ENCODE measurements at regions of chr1 and their contacts with region 1.

Region 1: GRCh38 chr1:156728597-156729462 is at the start of gene ISG20L2:
- DNase-seq: peak; percentile 98
- H3K4me3 ChIP-seq: peak within 1 kb of the TSS; percentile 70 to 79 (median 74)
- H3K27ac ChIP-seq: peak within 1 kb of the TSS; percentile 93 to 98 (median 94)
- H3K4me1 ChIP-seq: peaks cover 41 to 61% (median 59%) of the 10 kb centered on the region in 4 donors
- H3K27me3 ChIP-seq: no peaks in the 10 kb centered on the region
- CTCF ChIP-seq: no peak
- EP300 ChIP-seq: no peak
- POLR2A ChIP-seq: peak; percentile 34
- total RNA-seq, gene ISG20L2: 16.2 to 20.0 (median 19.0) TPM

Region 2: GRCh38 chr1:156608036-156608674 is 120.7 kb before region 1 on chr1:
- intact Hi-C with region 1: no loop called
- DNase-seq: no peak
- H3K4me3 ChIP-seq: no peak overlapping the region
- H3K27ac ChIP-seq: peak overlapping the region in 1 of 4 donors; percentile 64
- H3K4me1 ChIP-seq: peaks cover 0 to 15% (median 8%) of the 10 kb centered on the region in 4 donors
- H3K27me3 ChIP-seq: no peaks in the 10 kb centered on the region
- CTCF ChIP-seq: peak; percentile 63 to 88 (median 85)
- EP300 ChIP-seq: no peak
- POLR2A ChIP-seq: no peak

Region 3: DNA sequence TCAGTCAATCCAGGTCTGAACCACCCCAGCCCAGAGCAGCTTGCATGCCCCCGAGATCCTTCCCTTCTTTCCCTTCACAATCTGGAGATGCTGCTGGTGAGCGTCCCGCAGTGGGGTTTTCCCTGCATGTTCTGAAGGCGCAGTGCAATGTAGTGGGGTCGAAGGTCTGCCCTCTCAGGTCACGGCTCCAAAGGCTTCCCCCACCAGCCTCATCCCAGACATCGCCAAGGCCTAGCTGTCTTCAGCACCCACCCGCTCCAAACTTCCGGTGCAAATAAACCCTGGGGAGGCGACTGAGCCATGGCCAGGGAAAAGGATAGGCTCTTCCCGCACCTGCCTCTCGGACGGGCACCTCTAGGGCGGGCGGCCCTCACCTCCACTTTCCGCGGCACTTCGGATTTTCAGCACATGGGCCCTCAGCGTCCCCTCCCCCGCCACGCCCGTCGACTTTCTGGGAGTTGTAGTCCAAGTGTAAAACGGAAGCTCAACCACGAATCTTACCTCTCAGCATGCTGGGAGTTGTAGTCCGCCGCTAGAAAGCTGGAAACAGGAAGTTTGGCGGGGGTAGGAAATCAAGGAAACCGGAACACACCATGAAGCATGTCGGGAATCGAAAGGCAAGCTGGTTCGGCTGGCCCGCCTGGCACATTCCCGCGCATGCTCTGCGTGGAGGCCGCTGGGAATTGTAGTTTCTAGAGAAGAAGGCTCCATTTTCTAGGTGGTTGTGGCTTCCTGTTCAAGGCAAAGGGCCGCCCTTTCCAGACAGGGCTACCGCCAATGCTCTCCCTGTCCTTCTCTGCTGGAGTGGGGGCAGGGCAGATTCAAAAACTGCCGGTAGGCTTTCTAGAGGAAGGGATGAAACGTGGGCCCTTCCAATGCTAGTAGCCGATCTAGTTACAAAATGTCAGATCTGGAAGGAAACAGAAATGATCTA is 12.1 kb after region 1 on chr1 and contains the start of gene MRPL24:
- intact Hi-C with region 1: loop called (anchors 1 kb)
- DNase-seq: peak; percentile 99
- H3K4me3 ChIP-seq: peak within 1 kb of the TSS; percentile 60 to 72 (median 66)
- H3K27ac ChIP-seq: peak within 1 kb of the TSS; percentile 80 to 88 (median 85)
- H3K4me1 ChIP-seq: peaks cover 24 to 45% (median 37%) of the 10 kb centered on the region in 4 donors
- H3K27me3 ChIP-seq: no peaks in the 10 kb centered on the region
- CTCF ChIP-seq: no peak
- EP300 ChIP-seq: no peak
- POLR2A ChIP-seq: peak; percentile 3
- total RNA-seq, gene MRPL24: 43.5 to 67.4 (median 62.4) TPM

Region 4: DNA sequence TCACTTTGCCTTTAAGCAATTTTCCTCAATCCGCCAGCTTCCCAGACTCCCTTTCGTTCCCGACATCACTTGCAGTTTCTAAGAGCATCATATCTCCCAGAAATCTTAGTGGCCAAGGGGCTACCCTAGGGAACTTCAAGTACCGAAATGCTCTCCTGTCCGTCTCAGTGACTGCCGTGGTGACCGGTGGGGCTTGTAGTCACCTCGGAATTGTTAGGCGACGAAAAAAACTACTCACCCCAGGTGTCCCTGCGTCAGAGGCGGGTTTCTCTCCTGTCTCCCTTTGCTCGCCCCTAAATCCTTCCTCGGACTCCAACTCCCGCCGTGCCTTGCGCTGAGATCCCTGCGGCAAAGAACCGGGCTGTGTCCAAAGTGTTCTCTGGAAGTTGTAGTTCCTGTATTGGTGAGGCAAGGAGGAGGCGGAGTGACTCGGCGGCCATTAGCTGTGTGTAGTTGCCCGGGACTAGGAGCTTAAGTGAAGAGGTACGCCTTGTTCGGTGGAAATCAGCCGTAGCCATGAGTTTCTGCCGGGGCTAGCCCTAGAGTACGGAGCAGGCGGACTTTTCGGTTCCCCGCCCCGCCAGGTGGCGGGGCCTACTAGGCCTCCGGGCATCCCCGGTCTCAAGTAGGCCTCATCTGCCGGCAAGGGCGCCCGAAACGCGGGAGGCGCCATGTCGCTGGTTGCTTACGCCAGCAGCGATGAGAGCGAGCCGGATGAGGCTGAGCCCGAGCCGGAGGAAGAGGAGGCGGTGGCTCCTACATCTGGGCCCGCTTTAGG is 38.5 kb after region 1 on chr1 and contains the start of gene PRCC:
- intact Hi-C with region 1: loop called (anchors 1 kb)
- DNase-seq: peak; percentile 99
- H3K4me3 ChIP-seq: peak within 1 kb of the TSS; percentile 93 to 99 (median 96)
- H3K27ac ChIP-seq: peak within 1 kb of the TSS; percentile 95 to 97 (median 96)
- H3K4me1 ChIP-seq: peaks cover 40 to 57% (median 53%) of the 10 kb centered on the region in 4 donors
- H3K27me3 ChIP-seq: no peaks in the 10 kb centered on the region
- CTCF ChIP-seq: peak in 1 of 3 experiments; percentile 9
- EP300 ChIP-seq: no peak
- POLR2A ChIP-seq: no peak
- total RNA-seq, gene PRCC: 21.2 to 43.6 (median 38.7) TPM